ENCODE measurements at regions of chr9 and their contacts with region 1.

Region 1: DNA sequence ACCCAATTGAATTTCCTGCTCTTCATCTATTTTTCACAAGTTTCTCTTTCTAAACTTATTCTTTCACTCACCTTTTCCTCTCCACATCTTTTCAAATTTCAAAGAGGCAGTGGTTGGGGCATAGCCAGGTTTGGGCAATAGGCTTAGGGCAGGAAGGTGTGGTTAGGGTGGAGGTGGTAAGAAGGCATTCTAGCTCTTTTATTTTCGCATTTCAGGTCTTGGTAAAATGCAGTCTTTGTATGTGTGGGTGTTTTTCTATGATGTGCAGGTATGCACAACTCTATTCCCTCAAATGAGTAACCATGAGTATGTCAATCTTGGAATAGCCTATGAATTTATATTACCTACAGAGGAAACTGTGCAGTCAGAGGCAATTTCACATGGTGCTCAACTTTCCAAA is 129.8 kb upstream of the IFNE start:
- DNase-seq: peak; percentile 24
- H3K4me3 Mint-ChIP-seq: no peak overlapping the region
- H3K27ac Mint-ChIP-seq: no peak overlapping the region
- H3K4me1 Mint-ChIP-seq: peaks cover 22% of the 10 kb centered on the region
- H3K27me3 Mint-ChIP-seq: no peaks in the 10 kb centered on the region

Region 2: GRCh38 chr9:21591221-21592062 is 20.5 kb before region 1 on chr9:
- CTCF ChIA-PET with region 1: no interaction called
- POLR2A ChIA-PET with region 1: no interaction called
- intact Hi-C with region 1: loop called (anchors 1 kb)
- DNase-seq: peak; percentile 80
- H3K4me3 Mint-ChIP-seq: no peak overlapping the region
- H3K27ac Mint-ChIP-seq: no peak overlapping the region
- H3K4me1 Mint-ChIP-seq: peaks cover 15% of the 10 kb centered on the region
- H3K27me3 Mint-ChIP-seq: no peaks in the 10 kb centered on the region